ENCODE measurements at regions of chr6 and their contacts with region 1.

Region 1: DNA sequence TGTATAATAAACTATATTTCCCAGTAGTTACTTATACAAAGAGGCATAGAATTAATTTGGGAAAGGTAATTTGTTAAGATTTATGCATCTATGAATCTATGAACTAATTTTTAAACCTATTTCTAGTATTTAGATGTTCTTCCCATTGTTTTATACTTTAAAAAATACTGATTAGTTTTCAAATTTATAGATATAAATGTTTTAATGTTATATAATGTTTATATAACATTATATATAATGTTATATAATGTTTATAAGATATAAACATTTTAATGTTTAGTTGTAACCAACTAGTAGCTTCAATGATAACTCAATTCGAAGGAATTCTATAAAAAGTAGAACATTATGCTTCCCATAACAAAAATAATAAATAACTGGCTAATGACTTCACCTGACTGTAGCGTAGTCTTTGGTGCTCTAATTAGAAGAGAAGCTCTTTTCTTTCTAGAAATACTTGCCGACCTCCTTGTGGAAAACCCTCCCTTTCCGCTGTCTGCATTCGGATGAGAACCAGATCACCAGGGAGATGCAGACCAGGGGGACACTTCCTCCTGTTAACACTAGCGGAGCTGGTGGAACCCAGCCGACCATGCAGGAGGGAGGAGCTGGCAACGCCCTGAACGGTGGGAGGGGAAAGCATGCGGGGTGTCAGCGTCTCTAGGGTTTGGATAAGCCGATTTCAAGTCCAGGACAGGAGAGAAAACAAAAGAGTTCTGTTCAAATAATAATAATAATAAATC is 158.4 kb downstream of the OR2B2 start:
- DNase-seq: peak in 8 of 9 donors; percentile 38 to 69 (median 45)
- ATAC-seq: peak; percentile 22
- H3K4me3 ChIP-seq: peak overlapping the region; percentile 80
- H3K4me3 Mint-ChIP-seq: peak overlapping the region; percentile 81 to 99 (median 94)
- H3K27ac ChIP-seq: peak overlapping the region; percentile 96
- H3K27ac Mint-ChIP-seq: peak overlapping the region; percentile 84 to 100 (median 97)
- H3K4me1 ChIP-seq: peaks cover 6 to 20% of the 10 kb centered on the region in 2 donors
- H3K4me1 Mint-ChIP-seq: peaks cover 17 to 53% (median 39%) of the 10 kb centered on the region in 7 donors
- H3K27me3 ChIP-seq: no peaks in the 10 kb centered on the region
- H3K27me3 Mint-ChIP-seq: peaks cover 0 to 8% (median 0%) of the 10 kb centered on the region in 5 donors

Region 2: GRCh38 chr6:25962149-25963127 is 1791.4 kb before region 1 on chr6 and contains the start of gene TRIM38:
- CTCF ChIA-PET with region 1: no interaction called
- POLR2A ChIA-PET with region 1: no interaction called
- intact Hi-C with region 1: loop called in 1 of 2 experiments (anchors 2 kb)
- DNase-seq: peak; percentile 22 to 90 (median 85)
- ATAC-seq: peak; percentile 95
- H3K4me3 ChIP-seq: peak within 1 kb of the TSS; percentile 73
- H3K4me3 Mint-ChIP-seq: peak within 1 kb of the TSS; percentile 92 to 100 (median 97)
- H3K27ac ChIP-seq: peak within 1 kb of the TSS; percentile 97
- H3K27ac Mint-ChIP-seq: peak within 1 kb of the TSS; percentile 97 to 100 (median 98)
- H3K4me1 ChIP-seq: peaks cover 61 to 75% of the 10 kb centered on the region in 2 donors
- H3K4me1 Mint-ChIP-seq: peaks cover 61 to 89% (median 84%) of the 10 kb centered on the region in 7 donors
- H3K27me3 ChIP-seq: no peaks in the 10 kb centered on the region
- H3K27me3 Mint-ChIP-seq: no peaks in the 10 kb centered on the region
- total RNA-seq, gene TRIM38: 17.4 to 32.8 (median 29.9) TPM

Region 3: DNA sequence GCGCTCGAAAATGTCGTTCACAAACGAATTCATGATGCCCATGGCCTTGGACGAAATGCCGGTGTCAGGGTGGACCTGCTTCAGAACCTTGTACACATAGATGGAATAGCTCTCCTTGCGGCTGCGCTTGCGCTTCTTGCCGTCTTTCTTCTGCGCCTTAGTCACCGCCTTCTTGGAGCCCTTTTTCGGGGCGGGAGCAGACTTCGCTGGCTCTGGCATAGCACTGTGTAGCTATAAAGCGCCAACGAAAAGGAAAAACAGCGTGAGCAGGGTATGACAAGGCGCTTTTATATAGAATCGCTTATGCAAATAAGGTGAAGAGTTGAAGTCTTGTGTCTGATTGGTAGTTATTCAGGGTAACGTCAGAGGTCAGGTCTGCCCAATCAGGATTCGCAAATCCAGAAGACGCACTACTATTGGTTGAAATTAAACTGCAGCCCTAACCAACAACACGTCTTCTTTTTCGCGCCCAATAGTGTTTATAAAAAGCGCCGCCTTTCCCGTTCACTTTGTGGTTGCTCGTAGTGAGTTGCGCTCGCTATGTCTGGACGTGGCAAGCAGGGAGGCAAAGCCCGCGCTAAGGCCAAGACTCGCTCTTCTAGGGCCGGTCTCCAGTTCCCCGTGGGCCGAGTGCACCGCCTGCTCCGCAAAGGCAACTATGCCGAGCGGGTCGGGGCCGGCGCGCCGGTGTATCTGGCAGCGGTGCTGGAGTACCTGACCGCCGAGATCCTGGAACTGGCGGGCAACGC is 621.1 kb before region 1 on chr6:
- CTCF ChIA-PET with region 1: interaction called, 4 read pairs
- POLR2A ChIA-PET with region 1: interaction called, 11 read pairs
- intact Hi-C with region 1: loop called (anchors 1 kb)
- DNase-seq: peak; percentile 73 to 99 (median 97)
- ATAC-seq: peak; percentile 93
- H3K4me3 ChIP-seq: peak overlapping the region; percentile 90
- H3K4me3 Mint-ChIP-seq: no peak overlapping the region
- H3K27ac ChIP-seq: peak overlapping the region; percentile 81
- H3K27ac Mint-ChIP-seq: no peak overlapping the region
- H3K4me1 ChIP-seq: peaks cover 10 to 18% of the 10 kb centered on the region in 2 donors
- H3K4me1 Mint-ChIP-seq: peaks cover 6 to 49% (median 21%) of the 10 kb centered on the region in 7 donors
- H3K27me3 ChIP-seq: no peaks in the 10 kb centered on the region
- H3K27me3 Mint-ChIP-seq: no peaks in the 10 kb centered on the region

Region 4: DNA sequence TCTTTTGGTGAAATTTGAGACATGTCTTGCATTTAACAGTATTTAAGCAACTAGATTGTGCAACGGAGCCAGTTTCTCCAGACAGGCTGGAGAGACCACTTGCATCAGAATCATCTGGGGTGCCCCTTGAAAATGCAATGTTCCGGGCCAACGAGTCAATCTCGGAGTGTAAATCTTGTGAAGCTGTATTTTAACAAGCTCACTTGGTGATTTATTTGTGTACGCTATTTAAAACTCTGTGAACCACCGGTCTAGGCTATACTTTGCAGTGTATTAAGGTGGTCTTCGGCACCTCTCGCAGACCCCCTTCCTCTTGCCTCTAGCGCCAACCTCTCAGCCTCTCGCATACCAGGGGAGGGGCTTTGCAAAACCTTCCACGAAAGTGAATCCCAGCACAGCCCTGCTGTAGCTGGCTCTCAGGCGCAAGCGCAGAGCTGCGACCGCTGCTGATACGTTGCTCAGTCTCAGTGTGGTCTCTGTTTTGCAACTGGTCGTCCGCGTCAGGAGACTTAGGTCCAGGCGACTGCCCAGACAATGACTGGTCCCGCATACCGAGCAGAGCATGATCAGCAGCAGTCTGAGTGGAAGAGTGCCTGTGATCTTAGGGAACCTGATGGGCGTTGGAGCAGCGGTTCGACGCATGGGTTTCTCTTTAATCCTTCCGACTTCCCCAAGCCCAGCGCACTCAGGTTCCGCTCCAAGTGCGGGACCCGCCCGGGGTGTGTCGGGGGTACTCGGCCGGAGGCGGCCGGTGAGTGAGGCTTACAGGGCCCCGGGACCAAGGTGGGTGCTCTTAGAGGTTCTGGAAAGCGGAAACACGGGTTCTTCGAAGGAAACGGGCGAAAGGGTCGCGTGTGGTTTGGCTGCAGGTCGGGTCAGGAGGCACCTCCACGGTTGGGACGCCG is 365.3 kb before region 1 on chr6 and contains the start of gene ZNF391:
- CTCF ChIA-PET with region 1: no interaction called
- POLR2A ChIA-PET with region 1: interaction called, 5 read pairs
- intact Hi-C with region 1: loop called in 1 of 2 experiments (anchors 1 kb)
- DNase-seq: peak; percentile 46 to 77 (median 67)
- ATAC-seq: peak; percentile 90
- H3K4me3 ChIP-seq: peak within 1 kb of the TSS; percentile 92
- H3K4me3 Mint-ChIP-seq: peak within 1 kb of the TSS; percentile 95 to 99 (median 98)
- H3K27ac ChIP-seq: peak within 1 kb of the TSS; percentile 78
- H3K27ac Mint-ChIP-seq: peak within 1 kb of the TSS; percentile 85 to 96 (median 93)
- H3K4me1 ChIP-seq: peaks cover 4 to 9% of the 10 kb centered on the region in 2 donors
- H3K4me1 Mint-ChIP-seq: peaks cover 9 to 31% (median 18%) of the 10 kb centered on the region in 7 donors
- H3K27me3 ChIP-seq: no peaks in the 10 kb centered on the region
- H3K27me3 Mint-ChIP-seq: peaks cover 0 to 9% (median 2%) of the 10 kb centered on the region in 5 donors
- total RNA-seq, gene ZNF391: 0.19 to 5.7 (median 3.3) TPM

Region 5: DNA sequence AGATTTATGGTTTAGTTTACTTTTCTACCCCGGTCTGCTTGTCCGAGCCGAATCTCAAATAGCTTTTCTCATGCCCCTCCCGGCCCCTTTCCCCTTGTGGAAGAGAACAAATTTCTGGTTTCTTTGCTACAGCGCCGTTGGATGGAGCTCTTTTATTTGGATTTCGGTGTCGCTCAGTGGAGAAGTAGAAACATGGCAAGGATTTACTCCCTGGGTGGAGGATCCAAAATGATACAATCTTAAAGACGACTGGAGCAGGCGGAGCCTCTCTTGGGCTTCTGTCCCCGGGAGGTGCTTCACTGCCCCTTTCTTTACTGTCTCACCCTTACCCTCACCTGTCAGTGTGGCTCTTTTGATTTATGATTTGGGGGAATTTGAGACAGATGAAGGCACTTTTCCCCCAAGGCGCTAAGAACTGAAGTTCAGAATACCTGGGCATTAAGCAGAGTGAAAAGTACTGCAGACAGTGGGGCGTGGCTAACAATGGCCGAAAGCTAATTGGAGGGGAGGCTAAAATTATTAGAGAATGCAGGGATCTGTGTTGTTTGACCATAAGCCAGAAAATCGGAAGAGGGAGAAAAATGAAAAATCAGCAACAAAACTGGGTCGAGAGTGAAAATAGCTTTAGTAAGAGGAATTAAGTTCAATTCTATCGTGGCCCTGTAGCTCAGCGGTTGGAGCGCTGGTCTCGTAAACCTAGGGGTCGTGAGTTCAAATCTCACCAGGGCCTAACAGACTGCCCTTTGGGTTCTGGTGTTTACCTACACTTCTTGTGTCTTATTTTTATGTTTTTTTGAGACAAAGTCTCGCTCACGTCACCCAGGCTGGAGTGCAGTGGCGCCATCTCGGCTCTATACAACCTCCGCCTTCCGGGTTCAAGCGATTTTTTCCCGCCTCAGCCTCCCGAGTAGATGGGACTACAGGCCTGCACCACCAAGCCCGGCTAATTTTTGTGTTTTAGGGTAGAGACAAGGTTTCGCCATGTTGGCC is 135.8 kb before region 1 on chr6:
- CTCF ChIA-PET with region 1: no interaction called
- POLR2A ChIA-PET with region 1: no interaction called
- intact Hi-C with region 1: loop called in 1 of 2 experiments (anchors 5 kb)
- DNase-seq: no peak
- ATAC-seq: no peak
- H3K4me3 ChIP-seq: no peak overlapping the region
- H3K4me3 Mint-ChIP-seq: peak overlapping the region in 4 of 10 donors; percentile 2 to 78 (median 40)
- H3K27ac ChIP-seq: no peak overlapping the region
- H3K27ac Mint-ChIP-seq: no peak overlapping the region
- H3K4me1 ChIP-seq: no peaks in the 10 kb centered on the region
- H3K4me1 Mint-ChIP-seq: peaks cover 4 to 18% (median 17%) of the 10 kb centered on the region in 7 donors
- H3K27me3 ChIP-seq: peaks cover 0 to 11% of the 10 kb centered on the region in 2 donors
- H3K27me3 Mint-ChIP-seq: peaks cover 56 to 75% (median 69%) of the 10 kb centered on the region in 5 donors

Region 6: DNA sequence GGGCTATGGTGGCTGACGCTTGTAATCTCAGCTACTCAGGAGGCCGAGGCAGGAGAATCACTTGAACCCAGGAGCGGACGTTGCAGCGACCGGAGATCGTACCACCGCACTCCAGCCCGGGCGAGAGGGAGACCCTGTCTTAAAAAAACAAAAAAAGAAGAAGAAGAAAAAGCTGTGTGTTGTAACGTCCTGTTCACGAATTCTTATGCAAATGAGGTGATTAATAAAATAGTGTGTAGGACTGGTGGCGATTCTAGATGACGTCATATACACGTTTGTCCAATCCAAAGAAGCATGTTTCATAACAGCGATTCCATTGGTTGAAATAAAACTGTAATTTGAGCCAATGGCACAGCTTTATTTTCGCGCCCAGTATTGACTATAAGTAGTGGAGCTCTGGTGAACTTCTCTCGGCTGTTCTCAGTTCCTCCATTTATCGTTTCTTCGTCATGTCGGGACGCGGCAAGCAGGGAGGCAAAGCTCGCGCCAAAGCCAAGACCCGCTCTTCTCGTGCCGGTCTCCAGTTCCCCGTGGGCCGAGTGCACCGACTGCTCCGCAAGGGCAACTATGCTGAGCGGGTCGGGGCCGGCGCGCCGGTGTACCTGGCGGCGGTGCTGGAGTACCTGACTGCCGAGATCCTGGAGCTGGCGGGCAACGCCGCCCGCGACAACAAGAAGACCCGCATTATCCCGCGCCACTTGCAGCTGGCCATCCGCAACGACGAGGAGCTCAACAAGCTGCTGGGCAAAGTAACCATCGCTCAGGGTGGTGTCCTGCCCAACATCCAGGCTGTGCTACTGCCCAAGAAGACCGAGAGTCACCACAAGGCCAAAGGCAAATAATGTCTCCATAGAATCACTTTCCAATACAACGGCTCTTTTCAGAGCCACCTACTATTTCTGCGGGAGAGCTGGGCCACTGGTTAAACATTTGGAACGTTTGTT is 111.3 kb after region 1 on chr6:
- CTCF ChIA-PET with region 1: no interaction called
- POLR2A ChIA-PET with region 1: interaction called, 4 read pairs
- intact Hi-C with region 1: loop called (anchors 1 kb)
- DNase-seq: peak; percentile 56 to 93 (median 89)
- ATAC-seq: peak; percentile 85
- H3K4me3 ChIP-seq: peak overlapping the region; percentile 74
- H3K4me3 Mint-ChIP-seq: peak overlapping the region; percentile 85 to 99 (median 97)
- H3K27ac ChIP-seq: peak overlapping the region; percentile 71
- H3K27ac Mint-ChIP-seq: peak overlapping the region; percentile 88 to 98 (median 95)
- H3K4me1 ChIP-seq: peaks cover 8 to 25% of the 10 kb centered on the region in 2 donors
- H3K4me1 Mint-ChIP-seq: peaks cover 22 to 64% (median 46%) of the 10 kb centered on the region in 7 donors
- H3K27me3 ChIP-seq: no peaks in the 10 kb centered on the region
- H3K27me3 Mint-ChIP-seq: peaks cover 0 to 16% (median 0%) of the 10 kb centered on the region in 5 donors

Region 7: GRCh38 chr6:28542440-28543296 is 788.8 kb after region 1 on chr6:
- CTCF ChIA-PET with region 1: no interaction called
- POLR2A ChIA-PET with region 1: no interaction called
- intact Hi-C with region 1: loop called in 1 of 2 experiments (anchors 2 kb)
- DNase-seq: peak; percentile 25 to 76 (median 68)
- ATAC-seq: peak; percentile 75
- H3K4me3 ChIP-seq: peak overlapping the region; percentile 62
- H3K4me3 Mint-ChIP-seq: peak overlapping the region; percentile 79 to 94 (median 88)
- H3K27ac ChIP-seq: no peak overlapping the region
- H3K27ac Mint-ChIP-seq: peak overlapping the region; percentile 26 to 92 (median 85)
- H3K4me1 ChIP-seq: peaks cover 0 to 12% of the 10 kb centered on the region in 2 donors
- H3K4me1 Mint-ChIP-seq: peaks cover 15 to 46% (median 37%) of the 10 kb centered on the region in 7 donors
- H3K27me3 ChIP-seq: peaks cover 0 to 11% of the 10 kb centered on the region in 2 donors
- H3K27me3 Mint-ChIP-seq: peaks cover 0 to 84% (median 51%) of the 10 kb centered on the region in 5 donors